ENCODE measurements at regions of chr4 and their contacts with region 1.

Region 1: DNA sequence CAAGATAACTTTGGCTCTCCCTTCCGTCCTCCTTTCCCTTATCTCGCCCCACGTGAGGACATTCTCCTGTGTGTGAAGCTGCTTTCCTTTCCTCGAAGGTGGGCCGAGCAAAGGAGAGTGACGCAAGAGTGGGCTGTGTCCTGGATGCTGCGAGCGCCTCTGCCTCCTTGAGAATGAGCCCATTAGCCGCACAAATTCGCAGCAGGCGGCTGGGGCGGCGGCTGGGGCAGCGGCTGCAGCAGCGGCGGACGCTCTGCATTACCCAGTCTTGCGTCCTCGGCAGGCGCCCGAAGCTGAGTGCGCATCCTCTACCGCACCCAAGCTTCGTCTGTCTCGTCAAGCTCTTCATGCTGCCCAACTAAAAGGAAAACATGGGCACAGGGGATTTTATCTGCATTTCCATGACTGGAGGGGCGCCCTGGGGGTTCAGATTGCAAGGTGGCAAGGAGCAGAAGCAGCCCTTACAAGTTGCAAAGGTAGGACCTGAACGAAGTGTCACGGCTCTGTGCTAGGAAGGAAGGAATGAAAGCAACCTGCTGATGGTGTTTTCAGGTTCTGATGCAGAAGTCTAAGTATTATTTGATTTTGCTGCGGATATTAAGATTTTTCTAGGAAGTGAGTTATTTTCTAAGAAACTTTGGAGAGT is at the start of gene SYNPO2:
- DNase-seq: peak; percentile 90
- ATAC-seq: peak; percentile 94
- total RNA-seq, gene SYNPO2: 206 TPM

Region 2: DNA sequence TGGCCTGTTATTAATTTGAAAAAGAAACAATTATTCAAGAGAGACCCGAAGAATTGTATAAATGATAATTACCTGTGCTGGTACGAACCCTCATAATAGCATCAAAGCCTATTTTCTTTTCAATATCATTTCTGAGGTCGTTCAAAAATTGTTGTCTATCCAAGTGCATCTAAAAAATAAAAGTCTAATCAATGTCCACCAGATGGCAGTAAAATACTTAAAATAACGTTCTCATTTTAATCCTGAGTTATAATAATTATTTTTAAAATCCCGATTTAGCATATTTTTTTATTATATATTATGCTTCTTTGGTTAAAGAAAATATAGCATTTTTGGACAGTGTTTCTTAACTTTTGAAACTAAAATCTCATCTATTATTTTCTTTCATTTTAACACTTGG is 147.9 kb before region 1 on chr4:
- intact Hi-C with region 1: loop called (anchors 2 kb)
- DNase-seq: no peak
- ATAC-seq: no peak

Region 3: GRCh38 chr4:118772081-118772766 is 116.6 kb before region 1 on chr4:
- intact Hi-C with region 1: loop called (anchors 1 kb)
- DNase-seq: no peak
- ATAC-seq: peak; percentile 73

Region 4: GRCh38 chr4:118835571-118836300 is 53.1 kb before region 1 on chr4 and contains the start of gene SEC24D:
- intact Hi-C with region 1: loop called (anchors 5 kb)
- DNase-seq: peak; percentile 96
- ATAC-seq: peak; percentile 97
- total RNA-seq, gene SEC24D: 12.2 TPM

Region 5: DNA sequence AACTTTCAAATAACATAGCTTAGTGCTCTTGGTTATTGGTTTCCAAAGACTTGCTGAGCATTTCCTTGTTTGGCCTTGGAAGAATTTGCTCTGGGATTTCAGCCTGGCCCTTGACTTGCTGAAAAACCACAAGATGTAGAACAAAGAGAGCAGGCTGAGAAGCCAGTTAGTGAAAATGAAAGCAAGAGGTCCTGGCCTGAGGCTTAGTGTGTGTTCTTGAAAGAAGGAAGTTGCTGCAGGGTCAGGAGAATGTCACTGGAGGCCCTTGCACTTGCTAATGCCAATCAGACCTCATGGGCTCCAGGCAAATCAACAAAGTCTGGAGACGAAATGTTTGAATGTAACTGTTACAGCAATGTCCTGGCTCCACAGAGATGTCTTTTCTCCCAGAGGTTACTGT is 79.2 kb after region 1 on chr4:
- intact Hi-C with region 1: loop called (anchors 1 kb)
- DNase-seq: no peak
- ATAC-seq: peak; percentile 85

Region 6: DNA sequence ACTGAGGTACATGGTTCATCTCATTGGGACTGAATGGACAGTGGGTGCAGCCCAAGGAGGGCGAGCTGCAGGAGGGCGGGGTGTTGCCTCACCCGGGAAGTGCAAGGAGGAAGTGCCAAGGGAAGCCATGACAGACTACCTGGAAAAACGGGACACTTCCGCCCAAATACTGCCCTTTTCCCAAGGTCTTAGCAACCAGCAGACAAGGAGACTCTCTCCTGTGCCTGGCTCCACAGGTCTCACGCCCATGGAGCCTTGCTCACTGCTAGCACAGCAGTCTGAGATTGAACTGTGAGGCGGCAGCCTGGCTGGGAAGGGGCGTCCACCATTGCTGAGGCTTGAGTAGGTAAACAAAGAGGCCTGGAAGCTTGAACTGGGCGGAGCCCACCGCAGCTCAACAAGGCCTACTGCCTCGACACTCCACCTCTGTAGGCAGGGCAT is 309.0 kb after region 1 on chr4:
- intact Hi-C with region 1: no loop called
- DNase-seq: no peak
- ATAC-seq: no peak

Measured in Right ventricle myocardium inferior (tissue), 1 donor.